Gastrocnemius medialis (tissue), 4 donors: ENCODE measurements at regions of chr12 and their contacts with region 1.

Region 1: DNA sequence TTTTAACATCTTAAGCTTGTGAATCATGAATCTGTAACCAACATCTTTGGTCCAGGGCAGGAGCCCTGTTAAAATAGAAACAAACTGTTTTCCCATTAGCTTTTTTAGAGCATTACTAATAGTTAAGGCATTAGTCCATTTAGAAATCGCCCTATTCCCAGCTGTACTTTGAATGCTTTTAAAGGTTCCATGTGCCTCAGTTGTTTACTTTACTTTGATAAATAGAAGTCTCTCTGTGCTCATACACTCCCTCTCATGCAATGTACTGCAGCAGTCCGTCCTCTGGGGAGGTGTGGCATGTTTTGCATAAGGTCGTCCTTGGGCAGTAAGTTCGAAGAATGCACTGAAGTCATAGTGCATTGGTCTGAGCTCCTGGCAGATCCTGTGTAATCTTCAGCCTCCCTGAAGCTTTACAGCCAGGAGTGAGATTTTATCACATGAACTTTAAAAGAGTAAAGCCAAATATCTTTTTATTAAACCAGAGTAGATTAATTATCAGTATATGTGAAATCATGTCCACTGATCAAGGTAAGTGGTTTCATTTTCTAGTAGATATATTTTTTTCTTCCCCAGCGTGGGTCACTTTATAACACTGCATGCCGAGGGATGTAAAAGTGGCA is 134.7 kb downstream of the FGD4 start:
- DNase-seq: peak; percentile 79 to 85
- ATAC-seq: peak; percentile 88 to 91
- H3K4me3 ChIP-seq: peak overlapping the region; percentile 49 to 62 (median 58)
- H3K27ac ChIP-seq: peak overlapping the region; percentile 71 to 92 (median 80)
- H3K4me1 ChIP-seq: peaks cover 56 to 72% of the 10 kb centered on the region in 2 donors
- H3K27me3 ChIP-seq: no peaks in the 10 kb centered on the region
- CTCF ChIP-seq: no peak
- POLR2A ChIP-seq: peak; percentile 64 to 74

Region 2: GRCh38 chr12:32399337-32400113 is 134.6 kb before region 1 on chr12 and contains the start of gene FGD4:
- in situ Hi-C with region 1: no loop called
- intact Hi-C with region 1: loop called (anchors 1 kb)
- DNase-seq: peak; percentile 87 to 91
- ATAC-seq: peak; percentile 93 to 94
- H3K4me3 ChIP-seq: peak within 1 kb of the TSS; percentile 65 to 95 (median 82)
- H3K27ac ChIP-seq: peak within 1 kb of the TSS; percentile 63 to 86 (median 86)
- H3K4me1 ChIP-seq: peaks cover 4 to 16% of the 10 kb centered on the region in 2 donors
- H3K27me3 ChIP-seq: no peaks in the 10 kb centered on the region
- CTCF ChIP-seq: peak in 4 of 5 experiments; percentile 19 to 54 (median 46)
- POLR2A ChIP-seq: peak; percentile 76 to 83
- total RNA-seq, gene FGD4: 18.8 to 60.3 (median 40.8) TPM

Region 3: DNA sequence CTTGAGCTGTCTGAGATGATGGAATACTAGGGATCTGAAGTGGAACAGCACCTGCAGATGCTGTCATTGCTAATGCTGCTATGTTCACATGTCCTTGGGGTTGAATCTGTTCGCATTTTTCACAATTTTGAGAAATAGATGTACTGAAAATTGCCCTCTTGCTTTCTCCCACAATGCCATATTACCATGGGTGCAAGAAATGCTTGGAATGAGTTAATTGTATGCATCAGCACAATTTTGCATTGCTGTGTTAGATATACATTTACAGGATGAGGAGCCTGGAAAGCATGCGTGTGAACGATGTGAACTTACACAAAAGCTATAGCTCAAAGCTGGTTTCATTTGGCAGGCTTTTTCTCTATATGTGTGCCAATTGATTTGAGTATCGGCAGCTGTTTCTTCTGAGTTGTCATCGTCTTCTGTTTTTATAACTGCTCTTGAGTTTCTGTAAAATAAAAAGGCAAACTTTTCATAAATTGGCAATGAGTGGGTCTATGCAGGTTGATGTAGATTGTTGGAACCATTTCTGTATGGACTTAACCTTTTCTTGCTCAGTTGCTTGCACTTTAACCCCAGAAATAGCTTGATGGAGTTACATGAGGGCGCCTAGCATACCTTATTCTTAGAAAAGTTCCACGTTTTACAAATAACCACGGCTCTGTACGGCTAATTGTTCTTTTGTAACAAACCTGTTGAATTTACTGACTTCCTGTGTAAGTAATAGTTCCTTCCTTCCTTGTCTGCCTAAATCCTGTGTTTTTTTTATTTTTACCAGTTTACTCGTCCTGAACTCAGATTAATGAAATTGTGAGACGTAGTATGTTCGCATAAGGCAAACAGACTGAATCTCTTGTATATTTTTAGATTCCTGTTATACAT is 28.8 kb before region 1 on chr12:
- in situ Hi-C with region 1: no loop called
- intact Hi-C with region 1: loop called (anchors 2 kb)
- DNase-seq: no peak
- ATAC-seq: no peak
- H3K4me3 ChIP-seq: peak overlapping the region; percentile 34 to 58 (median 50)
- H3K27ac ChIP-seq: peak overlapping the region in 3 of 4 donors; percentile 21 to 85 (median 24)
- H3K4me1 ChIP-seq: peaks cover 65 to 72% of the 10 kb centered on the region in 2 donors
- H3K27me3 ChIP-seq: no peaks in the 10 kb centered on the region
- CTCF ChIP-seq: no peak
- POLR2A ChIP-seq: no peak

Region 4: DNA sequence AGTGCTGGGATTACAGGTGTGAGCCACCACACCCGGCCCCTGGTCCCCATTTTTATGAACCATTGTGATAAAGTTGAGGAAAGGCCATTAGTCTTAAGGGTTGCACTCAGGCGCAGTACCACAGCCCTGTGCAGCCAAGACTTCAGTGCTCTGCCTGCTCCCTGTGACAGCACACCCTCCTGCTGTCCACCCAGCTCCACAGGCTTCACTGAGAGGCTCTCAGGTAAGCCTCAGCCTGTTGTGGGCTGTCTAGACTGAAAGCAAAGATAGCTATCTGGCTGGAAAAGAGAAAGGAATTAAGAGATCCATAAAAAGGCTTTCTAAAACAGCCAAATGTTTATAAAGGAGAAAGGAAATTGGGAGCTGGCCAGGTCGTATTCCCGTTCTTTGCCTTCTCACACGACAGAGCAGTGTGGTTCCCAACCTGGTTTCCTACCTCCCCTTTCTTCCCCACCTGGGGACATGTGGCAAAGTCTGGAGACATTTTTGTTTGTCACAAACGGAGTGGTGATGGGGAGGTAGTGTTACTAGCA is 125.9 kb after region 1 on chr12:
- in situ Hi-C with region 1: no loop called
- intact Hi-C with region 1: loop called (anchors 2 kb)
- DNase-seq: no peak
- ATAC-seq: peak in 1 of 2 donors; percentile 7
- H3K4me3 ChIP-seq: peak overlapping the region in 1 of 4 donors; percentile 9
- H3K27ac ChIP-seq: peak overlapping the region; percentile 81 to 93 (median 87)
- H3K4me1 ChIP-seq: peaks cover 19 to 23% of the 10 kb centered on the region in 2 donors
- H3K27me3 ChIP-seq: no peaks in the 10 kb centered on the region
- CTCF ChIP-seq: no peak
- POLR2A ChIP-seq: no peak

Region 5: GRCh38 chr12:32679091-32679919 is 145.2 kb after region 1 on chr12 and contains the start of gene DNM1L:
- in situ Hi-C with region 1: no loop called
- intact Hi-C with region 1: loop called (anchors 1 kb)
- DNase-seq: peak; percentile 88 to 91
- ATAC-seq: peak; percentile 96 to 97
- H3K4me3 ChIP-seq: peak within 1 kb of the TSS; percentile 77 to 93 (median 88)
- H3K27ac ChIP-seq: peak within 1 kb of the TSS; percentile 87 to 91 (median 90)
- H3K4me1 ChIP-seq: peaks cover 13 to 19% of the 10 kb centered on the region in 2 donors
- H3K27me3 ChIP-seq: no peaks in the 10 kb centered on the region
- CTCF ChIP-seq: peak in 1 of 5 experiments; percentile 9
- POLR2A ChIP-seq: peak; percentile 70 to 89
- total RNA-seq, gene DNM1L: 39.3 to 68.3 (median 43.8) TPM

Region 6: DNA sequence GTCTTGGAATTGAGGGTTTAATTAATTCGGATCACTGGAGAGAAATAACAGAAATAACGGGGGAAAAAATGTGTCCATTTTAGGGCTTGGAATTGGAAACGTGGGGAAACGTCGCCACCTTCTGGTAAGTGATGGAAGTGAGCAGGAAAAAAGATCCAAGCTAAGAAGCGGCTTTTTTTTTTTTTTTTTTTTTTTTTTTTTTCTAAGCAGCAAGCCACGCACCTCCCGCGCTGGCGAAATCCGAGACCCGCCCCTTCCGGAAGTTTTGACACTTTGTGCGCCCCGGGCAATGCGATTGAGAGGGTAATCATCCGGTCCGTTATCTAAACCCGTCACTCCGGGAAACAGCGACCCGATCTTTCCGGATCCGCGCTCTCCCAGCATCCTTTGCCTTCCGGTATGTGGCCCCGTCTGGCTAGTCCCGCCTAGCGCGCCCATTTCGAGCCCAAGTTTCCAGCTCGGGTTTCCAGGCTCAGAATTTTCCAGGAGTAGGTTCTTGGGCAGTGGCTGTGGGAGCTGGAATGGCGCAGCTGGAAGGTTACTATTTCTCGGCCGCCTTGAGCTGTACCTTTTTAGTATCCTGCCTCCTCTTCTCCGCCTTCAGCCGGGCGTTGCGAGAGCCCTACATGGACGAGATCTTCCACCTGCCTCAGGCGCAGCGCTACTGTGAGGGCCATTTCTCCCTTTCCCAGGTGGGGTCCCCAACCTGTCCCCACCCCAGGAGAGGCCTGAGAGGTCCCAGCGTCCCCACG is 1488.2 kb after region 1 on chr12 and contains the start of gene ALG10:
- in situ Hi-C with region 1: no loop called
- intact Hi-C with region 1: loop called (anchors 5 kb)
- DNase-seq: peak; percentile 95 to 96
- ATAC-seq: peak; percentile 100
- H3K4me3 ChIP-seq: peak within 1 kb of the TSS; percentile 83 to 93 (median 88)
- H3K27ac ChIP-seq: peak within 1 kb of the TSS; percentile 84 to 91 (median 84)
- H3K4me1 ChIP-seq: peaks cover 14 to 18% of the 10 kb centered on the region in 2 donors
- H3K27me3 ChIP-seq: no peaks in the 10 kb centered on the region
- CTCF ChIP-seq: peak; percentile 60 to 85 (median 64)
- POLR2A ChIP-seq: no peak
- total RNA-seq, gene ALG10: 1.3 to 3.3 (median 3.0) TPM